CD8-positive, alpha-beta memory T cell (primary cell): ENCODE measurements at regions of chr1 and their contacts with region 1.

Region 1: DNA sequence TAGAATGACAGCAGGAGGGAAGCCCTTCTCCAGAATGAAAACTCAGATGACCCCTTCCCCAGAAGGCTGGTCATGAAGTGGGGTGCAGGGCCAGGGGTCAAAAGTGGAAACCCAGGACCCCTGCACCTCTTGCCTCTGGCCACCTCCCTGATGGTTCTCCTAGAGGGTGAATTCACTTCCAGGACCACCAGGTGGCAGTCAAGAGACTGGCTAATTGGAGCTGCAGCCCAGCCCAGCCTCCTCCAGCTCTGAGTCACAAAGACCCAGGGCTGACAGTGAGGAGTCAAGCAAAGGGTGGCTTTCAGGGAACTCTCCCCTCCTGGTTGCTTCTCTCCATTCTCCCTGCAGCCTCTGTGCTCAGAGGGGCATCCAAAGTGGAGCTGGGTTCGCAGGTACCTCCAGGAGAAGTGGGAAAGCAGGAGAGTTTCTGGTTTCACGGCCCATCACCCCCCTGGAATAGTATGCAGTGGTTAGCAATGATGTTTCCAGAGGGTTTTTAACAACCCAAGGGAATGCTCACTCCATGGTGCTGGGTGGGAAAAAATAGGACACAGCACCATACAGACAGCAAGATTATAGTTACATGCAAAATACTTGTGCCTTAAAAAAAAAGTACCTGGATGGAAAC is 6.1 kb upstream of the EPHB2 start:
- DNase-seq: peak; percentile 29 to 70 (median 46)
- H3K4me3 ChIP-seq: no peak overlapping the region
- H3K4me3 Mint-ChIP-seq: no peak overlapping the region
- H3K27ac ChIP-seq: no peak overlapping the region
- H3K27ac Mint-ChIP-seq: peak overlapping the region in 1 of 8 donors; percentile 43
- H3K4me1 ChIP-seq: no peaks in the 10 kb centered on the region
- H3K4me1 Mint-ChIP-seq: no peaks in the 10 kb centered on the region
- H3K27me3 ChIP-seq: peaks cover 5% of the 10 kb centered on the region
- H3K27me3 Mint-ChIP-seq: peaks cover 20 to 48% of the 10 kb centered on the region in 2 donors

Region 2: DNA sequence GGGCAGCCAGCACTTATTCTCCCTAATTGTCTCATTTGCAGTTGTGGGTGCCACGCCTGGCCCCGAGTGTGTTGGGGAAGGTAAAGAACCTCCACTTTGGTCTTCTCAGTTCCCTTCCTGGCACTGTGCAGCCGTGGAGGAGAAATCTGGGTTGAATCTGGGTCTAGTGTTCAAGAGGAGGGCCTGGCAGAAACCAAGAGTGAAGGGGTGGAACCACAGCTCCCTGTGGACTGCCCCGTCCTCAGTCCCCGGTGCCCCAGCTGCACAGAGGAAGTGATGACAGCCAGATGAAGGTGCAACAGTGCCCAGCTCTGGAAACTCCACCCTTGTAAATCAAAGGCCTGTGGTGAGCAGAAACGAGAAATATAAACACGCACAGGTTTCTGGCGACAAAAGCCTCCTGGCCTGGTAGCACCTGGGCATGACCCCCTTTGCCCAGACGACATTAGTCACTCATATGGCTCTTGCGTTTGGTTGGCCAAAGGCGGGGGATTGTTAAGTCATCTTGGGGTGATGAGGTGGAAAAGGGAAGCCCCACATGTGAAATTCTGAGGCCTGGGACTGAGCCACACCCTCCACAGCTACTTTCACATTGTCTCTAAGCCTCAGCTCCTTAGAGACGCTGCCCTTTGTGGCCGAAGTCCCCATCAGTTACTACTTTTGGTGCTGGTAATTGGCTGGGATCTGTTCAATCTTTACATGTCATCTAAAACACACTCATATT is 1410.1 kb before region 1 on chr1:
- CTCF ChIA-PET with region 1: no interaction called
- POLR2A ChIA-PET with region 1: no interaction called
- DNase-seq: peak; percentile 77 to 97 (median 90)
- H3K4me3 ChIP-seq: peak overlapping the region; percentile 78
- H3K4me3 Mint-ChIP-seq: peak overlapping the region; percentile 86 to 97 (median 92)
- H3K27ac ChIP-seq: peak overlapping the region; percentile 77
- H3K27ac Mint-ChIP-seq: peak overlapping the region; percentile 97 to 100 (median 99)
- H3K4me1 ChIP-seq: peaks cover 82% of the 10 kb centered on the region
- H3K4me1 Mint-ChIP-seq: peaks cover 71 to 90% (median 90%) of the 10 kb centered on the region in 3 donors
- H3K27me3 ChIP-seq: no peaks in the 10 kb centered on the region
- H3K27me3 Mint-ChIP-seq: peaks cover 0 to 2% of the 10 kb centered on the region in 2 donors

Region 3: GRCh38 chr1:22689505-22689904 is 15.0 kb before region 1 on chr1:
- CTCF ChIA-PET with region 1: no interaction called
- POLR2A ChIA-PET with region 1: no interaction called
- DNase-seq: no peak
- H3K4me3 ChIP-seq: no peak overlapping the region
- H3K4me3 Mint-ChIP-seq: no peak overlapping the region
- H3K27ac ChIP-seq: no peak overlapping the region
- H3K27ac Mint-ChIP-seq: no peak overlapping the region
- H3K4me1 ChIP-seq: no peaks in the 10 kb centered on the region
- H3K4me1 Mint-ChIP-seq: no peaks in the 10 kb centered on the region
- H3K27me3 ChIP-seq: peaks cover 5% of the 10 kb centered on the region
- H3K27me3 Mint-ChIP-seq: peaks cover 9 to 36% of the 10 kb centered on the region in 2 donors

Region 4: GRCh38 chr1:22717037-22717760 is 12.6 kb after region 1 on chr1:
- CTCF ChIA-PET with region 1: interaction called, 16 read pairs
- POLR2A ChIA-PET with region 1: no interaction called
- DNase-seq: no peak
- H3K4me3 ChIP-seq: no peak overlapping the region
- H3K4me3 Mint-ChIP-seq: no peak overlapping the region
- H3K27ac ChIP-seq: no peak overlapping the region
- H3K27ac Mint-ChIP-seq: no peak overlapping the region
- H3K4me1 ChIP-seq: peaks cover under 1% of the 10 kb centered on the region
- H3K4me1 Mint-ChIP-seq: peaks cover under 1 to 7% (median 2%) of the 10 kb centered on the region in 3 donors
- H3K27me3 ChIP-seq: peaks cover 16% of the 10 kb centered on the region
- H3K27me3 Mint-ChIP-seq: peaks cover 35 to 38% of the 10 kb centered on the region in 2 donors